ENCODE measurements at regions of chr15 and their contacts with region 1.

Region 1: DNA sequence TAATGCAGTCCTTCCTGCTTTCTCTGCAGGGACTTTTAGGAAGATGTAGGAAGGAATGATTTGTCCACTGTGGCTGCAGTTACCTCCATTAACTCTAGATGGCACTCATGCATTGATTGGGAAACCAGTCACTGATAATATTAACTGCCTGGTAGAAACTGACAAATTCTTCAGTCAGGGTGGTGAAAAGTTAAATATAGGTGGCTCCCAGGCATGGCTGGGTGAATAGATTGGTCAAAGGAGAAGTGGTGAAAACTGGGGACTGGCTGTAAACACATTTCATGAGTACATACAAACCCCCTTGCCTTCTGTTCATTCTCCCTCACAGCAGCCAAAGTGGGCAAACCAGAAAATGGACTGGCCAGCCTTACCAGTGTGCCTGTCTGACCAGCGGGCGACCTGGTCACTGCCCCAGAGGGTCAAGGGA is 333.4 kb downstream of the THSD4 start:
- DNase-seq: peak in 1 of 2 donors; percentile 62
- ATAC-seq: peak; percentile 47 to 82 (median 65)
- H3K4me3 ChIP-seq: no peak overlapping the region
- H3K27ac ChIP-seq: peak overlapping the region in 9 of 10 donors; percentile 19 to 66 (median 54)
- H3K4me1 ChIP-seq: peaks cover 0 to 58% (median 30%) of the 10 kb centered on the region in 9 donors
- H3K27me3 ChIP-seq: no peaks in the 10 kb centered on the region
- CTCF ChIP-seq: peak; percentile 74 to 97 (median 91)

Region 2: GRCh38 chr15:70826634-70827033 is 622.1 kb before region 1 on chr15:
- intact Hi-C with region 1: loop called in 1 of 10 experiments (anchors 10 kb)
- DNase-seq: no peak
- ATAC-seq: peak in 4 of 8 donors; percentile 35 to 83 (median 56)
- H3K4me3 ChIP-seq: no peak overlapping the region
- H3K27ac ChIP-seq: peak overlapping the region in 1 of 10 donors; percentile 36
- H3K4me1 ChIP-seq: peaks cover 5 to 34% (median 19%) of the 10 kb centered on the region in 9 donors
- H3K27me3 ChIP-seq: no peaks in the 10 kb centered on the region
- CTCF ChIP-seq: no peak

Region 3: DNA sequence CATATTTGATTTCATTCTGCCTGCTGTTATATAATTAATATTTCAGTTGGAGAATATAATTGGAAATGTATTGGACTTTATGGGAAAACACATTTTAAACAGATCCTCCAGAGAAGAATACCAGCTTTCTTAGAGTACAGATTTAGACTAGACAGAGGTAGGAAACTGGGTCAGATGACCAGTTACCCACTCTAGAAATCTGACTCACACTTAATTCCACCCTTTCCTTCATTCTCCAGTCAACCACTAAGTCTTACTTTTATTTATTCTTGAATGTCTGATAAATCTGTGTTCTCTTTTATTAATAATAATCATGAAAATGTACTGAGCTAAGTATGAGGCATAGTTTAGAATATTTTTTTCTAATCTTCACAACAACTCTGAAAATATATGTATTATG is 445.4 kb before region 1 on chr15:
- intact Hi-C with region 1: loop called in 1 of 10 experiments (anchors 10 kb)
- DNase-seq: no peak
- ATAC-seq: no peak
- H3K4me3 ChIP-seq: no peak overlapping the region
- H3K27ac ChIP-seq: no peak overlapping the region
- H3K4me1 ChIP-seq: peaks cover 0 to 6% (median 0%) of the 10 kb centered on the region in 9 donors
- H3K27me3 ChIP-seq: no peaks in the 10 kb centered on the region
- CTCF ChIP-seq: no peak

Region 4: DNA sequence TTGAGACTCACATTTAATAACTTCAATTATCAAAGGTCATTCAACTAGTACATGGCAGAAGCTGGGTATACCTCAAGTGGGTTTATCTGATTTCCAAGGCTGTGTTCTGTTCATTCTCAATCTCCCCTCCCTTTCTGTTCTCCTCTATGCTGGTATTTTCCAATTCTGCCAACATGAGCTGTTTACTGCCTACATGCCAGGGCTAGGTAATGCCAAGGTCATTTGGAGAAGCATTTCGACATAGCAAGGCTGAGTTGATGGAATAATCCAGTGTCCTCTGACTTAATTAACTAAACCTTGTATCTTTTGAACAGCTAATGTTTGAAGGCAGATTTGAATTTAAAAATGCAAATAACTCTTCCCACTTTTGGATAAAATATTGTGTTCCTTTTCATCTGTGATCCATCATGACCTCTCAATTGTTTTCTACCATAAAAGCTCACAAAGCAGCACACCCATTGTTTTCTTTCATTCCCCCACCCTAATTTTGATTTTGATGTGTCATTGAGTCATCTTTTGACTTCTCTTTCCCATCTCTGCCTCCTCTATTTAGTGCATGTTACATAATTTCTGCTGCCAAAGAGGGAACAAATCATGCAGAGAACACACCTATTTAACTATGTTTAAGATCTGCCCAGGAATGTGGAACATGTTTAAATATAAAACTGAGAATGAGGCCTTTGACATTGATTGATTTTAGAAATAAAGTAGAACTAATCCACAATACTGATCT is 52.8 kb after region 1 on chr15:
- intact Hi-C with region 1: loop called in 1 of 10 experiments (anchors 5 kb)
- DNase-seq: peak in 1 of 2 donors; percentile 37
- ATAC-seq: peak; percentile 69 to 96 (median 90)
- H3K4me3 ChIP-seq: no peak overlapping the region
- H3K27ac ChIP-seq: peak overlapping the region; percentile 13 to 73 (median 59)
- H3K4me1 ChIP-seq: peaks cover 0 to 36% (median 14%) of the 10 kb centered on the region in 9 donors
- H3K27me3 ChIP-seq: no peaks in the 10 kb centered on the region
- CTCF ChIP-seq: no peak

Region 5: GRCh38 chr15:71651750-71652186 is 203.1 kb after region 1 on chr15:
- intact Hi-C with region 1: loop called in 7 of 10 experiments (anchors 2 to 10 kb)
- DNase-seq: no peak
- ATAC-seq: peak in 5 of 8 donors; percentile 31 to 43 (median 35)
- H3K4me3 ChIP-seq: no peak overlapping the region
- H3K27ac ChIP-seq: peak overlapping the region in 2 of 10 donors; percentile 15 to 27
- H3K4me1 ChIP-seq: peaks cover 5 to 57% (median 26%) of the 10 kb centered on the region in 9 donors
- H3K27me3 ChIP-seq: no peaks in the 10 kb centered on the region
- CTCF ChIP-seq: peak in 8 of 9 donors; percentile 18 to 59 (median 40)

Region 6: GRCh38 chr15:71800835-71801745 is 352.4 kb after region 1 on chr15:
- intact Hi-C with region 1: loop called in 6 of 10 experiments (anchors 2 to 10 kb)
- DNase-seq: peak in 1 of 2 donors; percentile 40
- ATAC-seq: peak; percentile 65 to 90 (median 80)
- H3K4me3 ChIP-seq: no peak overlapping the region
- H3K27ac ChIP-seq: no peak overlapping the region
- H3K4me1 ChIP-seq: peaks cover 0 to 11% (median 5%) of the 10 kb centered on the region in 9 donors
- H3K27me3 ChIP-seq: peaks cover 0 to 4% (median 0%) of the 10 kb centered on the region in 7 donors
- CTCF ChIP-seq: peak; percentile 74 to 92 (median 85)

Measured in heart right ventricle (tissue), 16 donors.